ENCODE measurements at regions of chr5 and their contacts with region 1.

Region 1: DNA sequence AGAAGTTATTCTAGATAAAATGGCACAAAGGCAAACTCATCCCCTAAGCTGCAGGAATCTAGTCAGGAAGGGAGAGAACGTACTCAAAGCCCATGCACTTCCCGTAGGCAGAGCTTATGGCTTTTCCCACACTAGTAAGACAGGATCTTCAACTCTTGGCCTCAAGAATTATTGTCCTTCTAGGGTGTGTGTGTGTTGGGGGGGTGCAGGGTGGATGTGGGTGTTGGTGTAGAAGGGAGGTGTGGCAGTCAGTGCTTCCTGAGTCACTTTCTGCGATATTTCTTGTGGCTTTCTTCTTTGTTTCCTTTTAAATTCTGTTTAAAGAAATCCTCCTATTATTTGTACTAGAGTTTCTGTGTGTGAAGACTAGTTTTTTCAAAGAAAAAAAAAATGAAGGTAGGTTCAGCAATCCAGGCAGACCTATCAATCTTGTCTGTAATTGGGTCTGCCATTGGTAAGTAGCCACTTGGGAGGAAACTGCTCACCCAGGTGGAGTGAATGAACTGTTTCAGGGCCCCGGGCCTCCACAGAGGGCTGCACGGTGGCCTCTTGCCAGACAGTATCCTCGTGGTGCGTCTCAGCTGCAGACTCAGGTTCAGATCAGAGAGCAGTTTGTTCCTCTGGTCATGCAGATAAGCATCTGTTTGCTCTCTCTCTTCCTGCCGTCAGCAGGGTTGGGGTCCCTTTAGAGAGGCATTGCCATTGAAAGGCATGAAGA is 131.9 kb downstream of the NPR3 start:
- DNase-seq: no peak
- ATAC-seq: peak; percentile 75
- H3K4me3 ChIP-seq: no peak overlapping the region
- H3K27ac ChIP-seq: no peak overlapping the region
- H3K4me1 ChIP-seq: no peaks in the 10 kb centered on the region
- H3K27me3 ChIP-seq: no peaks in the 10 kb centered on the region
- CTCF ChIP-seq: no peak

Region 2: GRCh38 chr5:32709781-32710549 is 133.0 kb before region 1 on chr5:
- intact Hi-C with region 1: loop called (anchors 10 kb)
- DNase-seq: peak; percentile 80
- ATAC-seq: peak; percentile 68
- H3K4me3 ChIP-seq: peak overlapping the region; percentile 67
- H3K27ac ChIP-seq: peak overlapping the region; percentile 72
- H3K4me1 ChIP-seq: peaks cover 28% of the 10 kb centered on the region
- H3K27me3 ChIP-seq: peaks cover 26% of the 10 kb centered on the region
- CTCF ChIP-seq: peak; percentile 70

Region 3: DNA sequence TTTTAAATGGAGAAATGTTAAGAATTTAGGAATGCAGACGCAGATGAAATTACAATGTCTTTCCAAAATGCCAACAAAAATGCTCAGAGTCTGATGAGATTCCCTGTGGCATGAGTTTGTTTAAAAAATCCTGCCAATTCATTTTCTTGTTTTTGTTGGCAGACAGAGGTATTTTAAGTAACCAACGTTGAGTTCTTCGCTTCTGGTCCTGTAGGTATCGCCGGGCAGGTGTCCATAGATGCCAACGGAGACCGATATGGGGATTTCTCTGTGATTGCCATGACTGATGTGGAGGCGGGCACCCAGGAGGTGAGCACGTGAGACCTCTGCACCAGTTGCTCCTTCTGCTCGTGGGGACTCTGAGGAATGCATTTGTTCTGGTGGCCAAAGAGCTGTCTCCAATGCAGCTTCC is 62.5 kb before region 1 on chr5:
- intact Hi-C with region 1: no loop called
- DNase-seq: no peak
- ATAC-seq: no peak
- H3K4me3 ChIP-seq: no peak overlapping the region
- H3K27ac ChIP-seq: no peak overlapping the region
- H3K4me1 ChIP-seq: no peaks in the 10 kb centered on the region
- H3K27me3 ChIP-seq: no peaks in the 10 kb centered on the region
- CTCF ChIP-seq: no peak

Region 4: DNA sequence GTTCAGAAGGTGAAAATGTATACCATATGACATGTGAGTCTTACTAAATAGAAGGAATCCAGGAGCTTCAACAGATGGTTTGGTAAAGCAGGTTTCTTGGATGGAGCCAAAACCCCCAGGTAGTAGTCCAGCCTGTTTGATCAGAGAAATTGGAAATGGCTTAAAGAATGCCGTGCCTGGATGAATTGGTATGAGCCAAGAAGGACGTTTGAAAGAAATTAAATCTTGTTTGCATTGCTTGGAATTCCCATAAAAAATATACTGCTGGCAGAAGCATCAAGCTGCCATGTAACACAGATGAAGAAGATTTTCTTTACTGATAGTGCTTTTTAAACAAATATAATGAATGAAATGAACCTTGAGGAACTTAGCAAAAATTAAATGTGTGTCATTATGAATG is 44.4 kb after region 1 on chr5:
- intact Hi-C with region 1: no loop called
- DNase-seq: no peak
- ATAC-seq: no peak
- H3K4me3 ChIP-seq: no peak overlapping the region
- H3K27ac ChIP-seq: no peak overlapping the region
- H3K4me1 ChIP-seq: no peaks in the 10 kb centered on the region
- H3K27me3 ChIP-seq: no peaks in the 10 kb centered on the region
- CTCF ChIP-seq: no peak